A673 (cell line): ENCODE measurements at regions of chr14 and their contacts with region 1.

Region 1: GRCh38 chr14:102144914-102145313 is 5.2 kb downstream of the WDR20 start:
- DNase-seq: no peak
- H3K4me3 ChIP-seq: no peak overlapping the region
- H3K27ac ChIP-seq: no peak overlapping the region
- H3K4me1 ChIP-seq: peaks cover 7% of the 10 kb centered on the region
- H3K27me3 ChIP-seq: no peaks in the 10 kb centered on the region
- CTCF ChIP-seq: no peak

Region 2: DNA sequence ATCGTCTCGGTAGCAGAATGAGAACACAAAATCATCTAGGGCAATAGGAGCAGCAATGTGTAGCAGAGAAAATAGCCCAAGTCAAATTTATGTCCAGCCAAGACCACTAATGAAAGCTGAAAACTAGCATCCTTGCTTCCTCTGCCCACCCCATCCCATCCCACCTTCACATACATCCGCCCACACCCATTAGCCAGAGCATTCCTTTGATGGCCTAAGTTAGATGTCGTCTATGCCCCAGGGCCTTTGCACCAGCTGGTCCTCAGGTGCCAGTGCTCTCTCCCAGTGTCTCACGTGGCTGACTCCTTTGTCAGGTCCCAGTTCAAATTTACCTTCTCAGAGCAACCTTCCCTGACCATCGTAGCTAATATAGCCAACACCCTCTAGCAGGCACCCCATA is 401.2 kb before region 1 on chr14:
- CTCF ChIA-PET with region 1: no interaction called
- POLR2A ChIA-PET with region 1: no interaction called
- intact Hi-C with region 1: no loop called
- DNase-seq: no peak
- H3K4me3 ChIP-seq: no peak overlapping the region
- H3K27ac ChIP-seq: no peak overlapping the region
- H3K4me1 ChIP-seq: no peaks in the 10 kb centered on the region
- H3K27me3 ChIP-seq: no peaks in the 10 kb centered on the region
- CTCF ChIP-seq: no peak

Region 3: GRCh38 chr14:101843665-101844064 is 301.2 kb before region 1 on chr14:
- CTCF ChIA-PET with region 1: no interaction called
- POLR2A ChIA-PET with region 1: no interaction called
- intact Hi-C with region 1: no loop called
- DNase-seq: no peak
- H3K4me3 ChIP-seq: no peak overlapping the region
- H3K27ac ChIP-seq: no peak overlapping the region
- H3K4me1 ChIP-seq: no peaks in the 10 kb centered on the region
- H3K27me3 ChIP-seq: no peaks in the 10 kb centered on the region
- CTCF ChIP-seq: peak; percentile 27; the same call in 1 of the 2 replicates

Region 4: GRCh38 chr14:101965145-101965531 is 179.8 kb before region 1 on chr14:
- CTCF ChIA-PET with region 1: no interaction called
- POLR2A ChIA-PET with region 1: no interaction called
- intact Hi-C with region 1: no loop called
- DNase-seq: peak; percentile 62
- H3K4me3 ChIP-seq: peak overlapping the region; percentile 96
- H3K27ac ChIP-seq: peak overlapping the region; percentile 92
- H3K4me1 ChIP-seq: peaks cover 50% of the 10 kb centered on the region
- H3K27me3 ChIP-seq: no peaks in the 10 kb centered on the region
- CTCF ChIP-seq: no peak

Region 5: GRCh38 chr14:102178806-102179205 is 33.9 kb after region 1 on chr14:
- CTCF ChIA-PET with region 1: no interaction called
- POLR2A ChIA-PET with region 1: interaction called, 11 read pairs
- intact Hi-C with region 1: no loop called
- DNase-seq: no peak
- H3K4me3 ChIP-seq: no peak overlapping the region
- H3K27ac ChIP-seq: no peak overlapping the region
- H3K4me1 ChIP-seq: peaks cover 30% of the 10 kb centered on the region
- H3K27me3 ChIP-seq: no peaks in the 10 kb centered on the region
- CTCF ChIP-seq: no peak

Region 6: DNA sequence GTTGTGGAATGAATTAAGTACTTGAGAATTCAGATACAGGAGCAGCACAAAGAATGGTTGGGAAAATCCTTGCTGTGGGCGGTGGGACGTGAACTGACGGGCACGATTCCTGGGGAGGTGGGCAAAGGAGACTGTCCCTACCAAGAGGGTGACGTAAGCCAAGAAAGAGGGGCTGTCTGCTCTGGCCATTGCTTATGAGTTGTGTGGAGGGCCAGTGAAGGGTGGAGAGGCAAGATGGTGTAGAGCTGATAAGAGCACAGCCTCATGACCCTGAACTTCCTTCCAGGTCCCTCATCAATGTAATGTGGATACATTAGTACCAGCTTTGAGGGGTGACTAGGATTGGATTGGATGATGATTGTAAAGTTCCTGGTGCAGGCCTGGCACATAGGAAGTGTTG is 45.0 kb after region 1 on chr14:
- CTCF ChIA-PET with region 1: no interaction called
- POLR2A ChIA-PET with region 1: no interaction called
- intact Hi-C with region 1: no loop called
- DNase-seq: no peak
- H3K4me3 ChIP-seq: no peak overlapping the region
- H3K27ac ChIP-seq: no peak overlapping the region
- H3K4me1 ChIP-seq: peaks cover 22% of the 10 kb centered on the region
- H3K27me3 ChIP-seq: no peaks in the 10 kb centered on the region
- CTCF ChIP-seq: no peak